Naive thymus-derived CD4-positive, alpha-beta T cell (primary cell): ENCODE measurements at regions of chr3 and their contacts with region 1.

Region 1: GRCh38 chr3:170180908-170181879 is at the start of gene PHC3:
- DNase-seq: peak; percentile 88 to 95 (median 92)
- ATAC-seq: peak; percentile 86
- H3K4me3 ChIP-seq: peak within 1 kb of the TSS; percentile 93
- H3K4me3 Mint-ChIP-seq: peak within 1 kb of the TSS; percentile 88 to 100 (median 99)
- H3K27ac ChIP-seq: peak within 1 kb of the TSS; percentile 98
- H3K27ac Mint-ChIP-seq: peak within 1 kb of the TSS; percentile 96 to 100 (median 100)
- H3K4me1 ChIP-seq: peaks cover 19 to 39% of the 10 kb centered on the region in 2 donors
- H3K4me1 Mint-ChIP-seq: peaks cover 19 to 40% (median 33%) of the 10 kb centered on the region in 7 donors
- H3K27me3 ChIP-seq: no peaks in the 10 kb centered on the region
- H3K27me3 Mint-ChIP-seq: peaks cover 0 to 2% (median 0%) of the 10 kb centered on the region in 5 donors
- total RNA-seq, gene PHC3: 78.9 to 215 (median 158) TPM

Region 2: DNA sequence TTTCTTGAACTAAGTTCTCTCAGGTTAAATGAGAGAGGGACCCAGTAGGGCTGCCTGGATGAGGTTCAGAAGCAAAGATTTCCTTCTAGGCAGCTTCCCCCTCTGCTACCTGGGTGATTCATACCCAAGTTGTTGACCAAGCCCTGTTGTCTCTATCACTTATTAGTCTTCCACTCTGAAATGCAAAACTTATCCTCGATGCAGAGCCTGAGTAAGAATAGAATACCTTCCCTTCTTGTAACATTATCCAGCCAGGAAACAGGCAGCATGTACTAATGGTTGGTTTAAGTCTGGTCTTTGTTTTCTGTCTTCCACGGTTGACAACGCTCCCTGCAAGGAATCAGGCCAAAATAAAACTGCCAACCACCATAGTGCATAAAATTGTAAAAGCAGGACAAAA is 895.0 kb before region 1 on chr3:
- CTCF ChIA-PET with region 1: no interaction called
- POLR2A ChIA-PET with region 1: no interaction called
- intact Hi-C with region 1: no loop called
- DNase-seq: no peak
- ATAC-seq: no peak
- H3K4me3 ChIP-seq: no peak overlapping the region
- H3K4me3 Mint-ChIP-seq: no peak overlapping the region
- H3K27ac ChIP-seq: no peak overlapping the region
- H3K27ac Mint-ChIP-seq: no peak overlapping the region
- H3K4me1 ChIP-seq: no peaks in the 10 kb centered on the region
- H3K4me1 Mint-ChIP-seq: no peaks in the 10 kb centered on the region
- H3K27me3 ChIP-seq: no peaks in the 10 kb centered on the region
- H3K27me3 Mint-ChIP-seq: peaks cover 0 to 13% (median 0%) of the 10 kb centered on the region in 5 donors

Region 3: GRCh38 chr3:169772897-169773828 is 408.0 kb before region 1 on chr3 and contains the start of gene MYNN:
- CTCF ChIA-PET with region 1: no interaction called
- POLR2A ChIA-PET with region 1: interaction called, 7 read pairs
- intact Hi-C with region 1: loop called (anchors 1 to 2 kb)
- DNase-seq: peak; percentile 87 to 95 (median 93)
- ATAC-seq: peak; percentile 90
- H3K4me3 ChIP-seq: peak within 1 kb of the TSS; percentile 87
- H3K4me3 Mint-ChIP-seq: peak within 1 kb of the TSS; percentile 91 to 99 (median 97)
- H3K27ac ChIP-seq: peak within 1 kb of the TSS; percentile 100
- H3K27ac Mint-ChIP-seq: peak within 1 kb of the TSS; percentile 96 to 100 (median 99)
- H3K4me1 ChIP-seq: peaks cover 15 to 22% of the 10 kb centered on the region in 2 donors
- H3K4me1 Mint-ChIP-seq: peaks cover 18 to 69% (median 56%) of the 10 kb centered on the region in 7 donors
- H3K27me3 ChIP-seq: no peaks in the 10 kb centered on the region
- H3K27me3 Mint-ChIP-seq: peaks cover 0 to 5% (median 0%) of the 10 kb centered on the region in 5 donors
- total RNA-seq, gene MYNN: 16.2 to 20.8 (median 19.0) TPM

Region 4: DNA sequence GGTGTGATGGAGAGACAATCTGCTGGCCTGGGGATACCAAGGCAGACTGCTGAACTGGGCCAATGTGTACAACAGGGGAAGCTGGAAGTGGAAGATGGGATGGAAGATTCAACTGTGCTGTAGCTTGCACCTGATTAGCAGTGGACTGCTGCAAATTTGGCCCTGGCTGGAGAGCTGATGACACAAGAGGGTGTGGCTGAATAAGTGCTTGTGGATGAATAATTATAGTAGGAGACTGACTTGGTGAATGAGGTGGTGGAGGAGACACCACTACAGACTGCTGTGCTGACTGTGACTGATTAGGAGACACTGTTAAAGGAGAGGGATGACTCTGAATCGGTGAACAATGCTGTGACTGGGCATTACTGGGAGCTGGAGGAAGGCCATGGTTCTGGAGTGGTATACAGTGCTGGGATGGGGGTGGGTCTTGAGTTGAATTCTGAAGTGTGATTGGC is 52.2 kb before region 1 on chr3:
- CTCF ChIA-PET with region 1: interaction called, 5 read pairs
- POLR2A ChIA-PET with region 1: interaction called, 3 read pairs
- intact Hi-C with region 1: loop called in 1 of 2 experiments (anchors 5 kb)
- DNase-seq: no peak
- ATAC-seq: peak; percentile 52
- H3K4me3 ChIP-seq: no peak overlapping the region
- H3K4me3 Mint-ChIP-seq: peak overlapping the region; percentile 53 to 89 (median 75)
- H3K27ac ChIP-seq: peak overlapping the region; percentile 40
- H3K27ac Mint-ChIP-seq: peak overlapping the region; percentile 50 to 88 (median 73)
- H3K4me1 ChIP-seq: peaks cover 0 to 9% of the 10 kb centered on the region in 2 donors
- H3K4me1 Mint-ChIP-seq: peaks cover 13 to 71% (median 42%) of the 10 kb centered on the region in 7 donors
- H3K27me3 ChIP-seq: no peaks in the 10 kb centered on the region
- H3K27me3 Mint-ChIP-seq: no peaks in the 10 kb centered on the region

Region 5: GRCh38 chr3:170154569-170155143 is 26.5 kb before region 1 on chr3:
- CTCF ChIA-PET with region 1: no interaction called
- POLR2A ChIA-PET with region 1: interaction called, 41 read pairs
- intact Hi-C with region 1: loop called in 1 of 2 experiments (anchors 1 kb)
- DNase-seq: peak in 6 of 9 donors; percentile 23 to 48 (median 36)
- ATAC-seq: peak; percentile 84
- H3K4me3 ChIP-seq: peak overlapping the region; percentile 21
- H3K4me3 Mint-ChIP-seq: peak overlapping the region; percentile 72 to 91 (median 82)
- H3K27ac ChIP-seq: peak overlapping the region; percentile 60
- H3K27ac Mint-ChIP-seq: peak overlapping the region; percentile 80 to 97 (median 95)
- H3K4me1 ChIP-seq: peaks cover 14 to 28% of the 10 kb centered on the region in 2 donors
- H3K4me1 Mint-ChIP-seq: peaks cover 36 to 75% (median 57%) of the 10 kb centered on the region in 7 donors
- H3K27me3 ChIP-seq: no peaks in the 10 kb centered on the region
- H3K27me3 Mint-ChIP-seq: no peaks in the 10 kb centered on the region

Region 6: GRCh38 chr3:170869645-170870593 is 688.7 kb after region 1 on chr3 and contains the start of gene RPL22L1:
- CTCF ChIA-PET with region 1: no interaction called
- POLR2A ChIA-PET with region 1: interaction called, 3 read pairs
- intact Hi-C with region 1: loop called in 1 of 2 experiments (anchors 1 kb)
- DNase-seq: peak; percentile 83 to 92 (median 90)
- ATAC-seq: peak; percentile 96
- H3K4me3 ChIP-seq: peak within 1 kb of the TSS; percentile 84
- H3K4me3 Mint-ChIP-seq: peak within 1 kb of the TSS; percentile 93 to 98 (median 94)
- H3K27ac ChIP-seq: peak within 1 kb of the TSS; percentile 86
- H3K27ac Mint-ChIP-seq: peak within 1 kb of the TSS; percentile 96 to 99 (median 98)
- H3K4me1 ChIP-seq: peaks cover 22% of the 10 kb centered on the region in 2 donors
- H3K4me1 Mint-ChIP-seq: peaks cover 10 to 41% (median 26%) of the 10 kb centered on the region in 7 donors
- H3K27me3 ChIP-seq: no peaks in the 10 kb centered on the region
- H3K27me3 Mint-ChIP-seq: peaks cover 0 to 4% (median 0%) of the 10 kb centered on the region in 5 donors
- total RNA-seq, gene RPL22L1: 27.5 to 62.6 (median 47.9) TPM

Region 7: DNA sequence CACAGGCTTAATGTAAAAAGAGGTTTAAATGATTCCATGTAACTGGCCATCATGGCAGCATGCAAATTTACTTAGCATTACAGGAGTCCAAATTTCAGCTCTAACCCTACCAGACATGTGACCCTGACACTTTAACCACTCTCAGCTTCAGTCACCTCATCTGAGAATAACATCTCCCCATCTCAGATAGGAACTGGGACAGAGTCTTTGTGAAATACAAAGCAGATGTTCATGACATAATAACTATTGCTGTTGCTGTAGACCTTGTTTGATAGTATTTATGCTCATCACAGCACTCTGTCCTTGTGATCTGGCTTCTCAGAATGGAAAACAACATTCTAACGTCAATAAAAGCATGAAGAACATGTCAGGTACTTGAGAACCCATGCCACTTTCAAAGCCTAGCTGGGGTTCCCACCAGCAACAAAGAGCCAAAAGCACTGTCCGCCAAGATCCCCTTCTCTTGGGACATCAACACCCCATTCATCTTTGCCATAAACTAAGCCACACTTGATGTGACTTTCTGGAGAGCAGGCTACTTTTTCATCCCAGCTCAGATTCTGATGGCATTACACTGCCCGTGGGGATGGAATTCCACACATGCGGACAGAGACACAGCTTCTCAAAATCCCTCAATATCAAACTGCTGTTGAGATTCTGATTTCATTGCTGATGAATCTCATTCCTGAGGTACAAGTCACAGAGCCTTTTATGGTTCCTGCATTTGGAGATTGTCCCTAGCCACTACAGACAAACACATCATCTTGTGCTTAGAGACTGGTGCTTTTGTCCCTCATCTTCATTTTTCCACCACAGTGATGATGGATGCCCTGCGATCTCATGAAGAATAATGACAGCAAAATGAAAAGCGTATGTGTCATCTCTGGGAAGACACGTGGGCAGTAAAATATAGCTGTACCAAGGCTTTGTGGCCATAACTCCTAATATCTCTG is 1076.3 kb after region 1 on chr3:
- CTCF ChIA-PET with region 1: no interaction called
- POLR2A ChIA-PET with region 1: no interaction called
- intact Hi-C with region 1: loop called in 1 of 2 experiments (anchors 10 kb)
- DNase-seq: peak in 3 of 9 donors; percentile 13 to 36 (median 33)
- ATAC-seq: peak; percentile 45
- H3K4me3 ChIP-seq: no peak overlapping the region
- H3K4me3 Mint-ChIP-seq: peak overlapping the region; percentile 16 to 70 (median 59)
- H3K27ac ChIP-seq: peak overlapping the region; percentile 70
- H3K27ac Mint-ChIP-seq: peak overlapping the region in 8 of 9 donors; percentile 91 to 99 (median 94)
- H3K4me1 ChIP-seq: peaks cover 53 to 70% of the 10 kb centered on the region in 2 donors
- H3K4me1 Mint-ChIP-seq: peaks cover 59 to 100% (median 93%) of the 10 kb centered on the region in 7 donors
- H3K27me3 ChIP-seq: no peaks in the 10 kb centered on the region
- H3K27me3 Mint-ChIP-seq: no peaks in the 10 kb centered on the region